Adrenal gland (tissue), 19 donors: ENCODE measurements at regions of chr3 and their contacts with region 1.

Region 1: GRCh38 chr3:66276705-66277274 is 56.0 kb downstream of the SLC25A26 start:
- DNase-seq: peak; percentile 32 to 84 (median 66)
- H3K4me3 ChIP-seq: no peak overlapping the region
- H3K27ac ChIP-seq: no peak overlapping the region
- H3K4me1 ChIP-seq: no peaks in the 10 kb centered on the region
- H3K27me3 ChIP-seq: no peaks in the 10 kb centered on the region
- CTCF ChIP-seq: peak; percentile 39 to 75 (median 71)
- POLR2A ChIP-seq: no peak

Region 2: DNA sequence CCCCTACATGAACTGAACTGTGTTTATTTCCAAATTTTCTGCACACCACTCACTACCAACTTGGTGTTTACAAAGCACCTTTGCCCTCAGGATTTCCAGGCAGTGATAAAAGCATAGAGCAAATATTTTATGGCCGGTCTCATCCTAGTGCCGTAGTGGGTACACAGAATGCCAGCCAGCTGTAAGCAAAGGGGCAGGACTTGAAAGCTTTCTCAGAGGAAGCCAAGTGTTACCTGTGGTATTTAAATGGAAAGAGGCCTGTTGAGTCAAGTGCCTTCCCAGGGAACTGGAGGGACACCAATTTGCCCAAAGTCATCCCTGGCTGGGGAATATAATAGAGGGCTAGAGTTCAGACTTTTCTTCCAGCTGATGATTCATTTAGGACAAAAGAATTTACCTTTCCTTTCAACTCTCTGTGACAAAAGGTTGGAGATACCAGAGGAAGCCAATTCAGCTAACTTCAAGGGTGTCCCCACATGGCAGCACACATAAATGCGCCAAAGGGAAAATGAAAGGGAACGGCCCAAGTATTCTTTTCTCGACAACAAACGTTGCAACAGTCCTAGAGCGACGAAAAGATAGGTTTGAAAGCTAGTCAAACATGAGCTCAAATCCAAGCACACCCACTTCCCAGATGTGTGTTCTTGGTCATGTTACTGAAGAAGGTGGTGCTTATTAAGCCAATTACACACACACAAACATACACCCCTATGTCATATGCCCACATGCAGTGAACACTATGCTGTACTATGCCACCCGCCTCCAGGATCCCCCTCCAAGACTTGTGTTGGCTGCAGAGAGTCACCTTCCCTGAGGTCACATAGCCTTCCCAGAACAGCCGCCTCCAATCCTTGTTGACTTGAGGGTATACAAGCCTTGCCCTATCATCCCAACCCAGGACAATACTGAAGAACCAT is 265.8 kb before region 1 on chr3:
- intact Hi-C with region 1: no loop called
- DNase-seq: no peak
- H3K4me3 ChIP-seq: no peak overlapping the region
- H3K27ac ChIP-seq: no peak overlapping the region
- H3K4me1 ChIP-seq: no peaks in the 10 kb centered on the region
- H3K27me3 ChIP-seq: no peaks in the 10 kb centered on the region
- CTCF ChIP-seq: no peak
- POLR2A ChIP-seq: no peak

Region 3: GRCh38 chr3:66394019-66394752 is 117.4 kb after region 1 on chr3:
- intact Hi-C with region 1: loop called in 1 of 2 experiments (anchors 10 kb)
- DNase-seq: no peak
- H3K4me3 ChIP-seq: no peak overlapping the region
- H3K27ac ChIP-seq: peak overlapping the region in 2 of 5 donors; percentile 34 to 66
- H3K4me1 ChIP-seq: no peaks in the 10 kb centered on the region
- H3K27me3 ChIP-seq: no peaks in the 10 kb centered on the region
- CTCF ChIP-seq: no peak
- POLR2A ChIP-seq: no peak

Region 4: GRCh38 chr3:66407611-66408218 is 130.9 kb after region 1 on chr3:
- intact Hi-C with region 1: loop called in 1 of 2 experiments (anchors 10 kb)
- DNase-seq: peak; percentile 41 to 85 (median 66)
- H3K4me3 ChIP-seq: no peak overlapping the region
- H3K27ac ChIP-seq: no peak overlapping the region
- H3K4me1 ChIP-seq: no peaks in the 10 kb centered on the region
- H3K27me3 ChIP-seq: no peaks in the 10 kb centered on the region
- CTCF ChIP-seq: peak; percentile 72 to 91 (median 84)
- POLR2A ChIP-seq: no peak